Mucosa of descending colon (tissue), 3 donors: ENCODE measurements at regions of chr17 and their contacts with region 1.

Region 1: GRCh38 chr17:48335858-48336500 is 94.0 kb downstream of the SKAP1 start:
- DNase-seq: no peak
- ATAC-seq: peak; percentile 70
- H3K4me3 ChIP-seq: no peak overlapping the region
- H3K4me1 ChIP-seq: no peaks in the 10 kb centered on the region
- CTCF ChIP-seq: peak; percentile 38

Region 2: DNA sequence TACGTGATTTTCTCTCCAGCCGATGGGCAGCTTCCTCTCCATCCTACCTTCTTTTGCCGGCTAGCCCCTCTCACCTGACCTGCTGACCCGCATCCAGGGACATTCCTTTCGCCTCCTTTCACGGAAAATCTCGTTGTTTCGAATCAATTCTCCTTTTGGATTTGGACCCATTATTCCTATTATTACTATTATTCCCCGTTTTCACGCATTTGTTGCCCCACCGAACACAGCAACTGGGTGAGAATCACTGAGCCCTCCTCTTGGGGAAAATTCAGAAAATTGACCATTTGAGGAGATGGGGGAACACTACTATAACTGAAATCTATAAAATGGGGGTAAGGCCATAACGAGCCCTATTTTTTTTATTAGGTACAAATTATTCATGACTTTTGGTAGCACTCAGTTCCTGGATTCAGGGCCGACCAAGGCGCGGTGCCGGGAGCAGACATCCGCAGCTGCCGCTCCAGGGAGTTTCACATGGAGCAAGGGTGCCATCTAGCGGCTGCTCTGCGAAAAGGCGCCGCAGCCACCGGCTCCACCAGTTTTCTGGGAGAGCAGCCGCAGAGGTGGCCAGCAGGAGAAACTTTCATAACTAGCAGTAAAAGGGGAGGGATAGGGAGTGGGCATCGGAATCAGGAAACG is 282.4 kb after region 1 on chr17:
- intact Hi-C with region 1: loop called (anchors 5 to 10 kb)
- DNase-seq: peak; percentile 91 to 97 (median 94)
- ATAC-seq: peak; percentile 75
- H3K4me3 ChIP-seq: no peak overlapping the region
- H3K4me1 ChIP-seq: peaks cover 44% of the 10 kb centered on the region
- CTCF ChIP-seq: peak; percentile 96

Region 3: GRCh38 chr17:48625495-48626244 is 289.7 kb after region 1 on chr17:
- intact Hi-C with region 1: loop called in 1 of 2 experiments (anchors 10 kb)
- DNase-seq: peak; percentile 89 to 92 (median 90)
- ATAC-seq: peak; percentile 77
- H3K4me3 ChIP-seq: peak overlapping the region; percentile 26
- H3K4me1 ChIP-seq: peaks cover 38% of the 10 kb centered on the region
- CTCF ChIP-seq: no peak